Activated CD4-positive, alpha-beta T cell treated with anti-CD3 and anti-CD28 coated beads, Interleukin-2, amount 10 ng/mL, durations not matched to agents 24 days and 14 days (primary cell): ENCODE measurements at regions of chr13 and their contacts with region 1.

Region 1: DNA sequence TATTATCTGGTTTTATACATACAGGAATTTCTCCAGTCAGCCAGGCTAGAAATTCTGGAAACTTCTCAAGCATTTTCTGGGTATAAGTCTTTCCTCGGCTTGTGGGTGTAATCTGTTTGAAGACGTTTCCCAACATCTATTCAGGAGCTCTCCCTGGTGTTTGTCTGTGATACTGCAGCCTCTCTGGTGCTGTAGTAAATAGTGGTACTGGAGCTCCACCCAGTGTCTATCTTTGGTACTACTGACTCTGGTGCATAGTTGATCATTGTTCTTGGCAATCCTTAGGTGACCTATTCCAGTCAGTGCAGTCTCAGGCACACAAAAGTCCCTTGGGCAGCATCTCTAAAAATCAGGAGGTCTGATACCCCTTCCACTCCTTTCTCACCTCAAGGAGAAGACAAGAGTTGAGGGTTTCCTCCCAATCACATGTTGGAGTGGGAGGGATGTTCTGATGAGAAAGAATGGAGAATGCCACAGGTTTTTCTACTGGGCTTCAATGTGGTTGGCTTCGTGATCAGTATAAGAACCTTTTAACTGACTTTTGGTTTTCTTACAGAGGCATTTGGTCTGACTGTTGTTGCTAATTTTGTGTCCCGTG is 115.5 kb downstream of the CYSLTR2 start:
- DNase-seq: peak; percentile 96
- H3K4me3 Mint-ChIP-seq: no peak overlapping the region
- H3K27ac Mint-ChIP-seq: no peak overlapping the region
- H3K4me1 Mint-ChIP-seq: peaks cover 11% of the 10 kb centered on the region
- H3K27me3 Mint-ChIP-seq: peaks cover 26% of the 10 kb centered on the region

Region 2: DNA sequence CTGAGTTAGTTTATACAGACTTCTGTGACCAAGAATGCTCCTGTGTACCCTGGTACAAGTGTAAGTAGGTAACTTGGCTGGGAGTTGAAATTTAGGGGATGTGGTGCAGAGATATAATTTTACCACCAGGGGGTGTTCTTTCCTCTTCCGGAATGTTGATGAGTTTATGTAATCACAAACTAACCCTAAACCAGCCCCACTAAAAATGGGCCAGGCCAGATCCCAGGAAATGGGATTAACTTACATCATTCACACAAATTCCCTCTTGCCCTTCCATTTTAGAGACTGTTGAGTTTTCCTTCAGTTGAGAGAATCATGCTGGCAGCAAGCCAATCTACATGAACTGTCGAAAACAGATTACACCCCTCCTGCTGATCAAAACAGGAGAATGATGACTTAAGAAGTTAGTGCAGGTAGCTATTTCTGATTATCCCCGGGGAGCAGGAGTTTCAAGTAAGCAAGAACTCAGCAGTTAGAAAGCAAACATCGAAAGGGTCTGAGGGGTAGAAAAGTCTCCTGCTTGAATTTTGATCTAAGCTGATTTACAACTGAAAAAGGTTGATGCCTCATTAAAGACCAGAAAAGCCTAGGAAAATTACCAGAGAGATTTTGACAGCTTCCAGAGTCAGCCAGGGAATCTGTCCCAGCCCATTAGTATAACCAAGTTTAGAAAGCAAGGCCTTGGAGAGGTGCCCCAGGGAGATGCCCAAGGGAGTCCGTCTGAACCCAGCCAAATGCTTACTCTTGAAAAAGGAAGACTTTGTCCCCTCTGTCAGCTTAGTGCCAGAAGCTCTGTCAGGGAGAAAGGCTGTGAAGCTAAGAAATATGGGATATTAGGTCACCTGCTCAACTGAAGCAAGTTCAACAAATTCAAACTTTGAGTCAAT is 642.0 kb before region 1 on chr13:
- intact Hi-C with region 1: loop called (anchors 1 kb)
- DNase-seq: peak; percentile 81
- H3K4me3 Mint-ChIP-seq: no peak overlapping the region
- H3K27ac Mint-ChIP-seq: no peak overlapping the region
- H3K4me1 Mint-ChIP-seq: peaks cover 18% of the 10 kb centered on the region
- H3K27me3 Mint-ChIP-seq: peaks cover 13% of the 10 kb centered on the region

Region 3: GRCh38 chr13:48334534-48335127 is 434.6 kb before region 1 on chr13:
- intact Hi-C with region 1: loop called (anchors 1 kb)
- DNase-seq: peak; percentile 65
- H3K4me3 Mint-ChIP-seq: no peak overlapping the region
- H3K27ac Mint-ChIP-seq: no peak overlapping the region
- H3K4me1 Mint-ChIP-seq: peaks cover 6% of the 10 kb centered on the region
- H3K27me3 Mint-ChIP-seq: no peaks in the 10 kb centered on the region

Region 4: GRCh38 chr13:48595431-48596429 is 173.5 kb before region 1 on chr13:
- intact Hi-C with region 1: loop called (anchors 1 kb)
- DNase-seq: peak; percentile 84
- H3K4me3 Mint-ChIP-seq: no peak overlapping the region
- H3K27ac Mint-ChIP-seq: no peak overlapping the region
- H3K4me1 Mint-ChIP-seq: peaks cover under 1% of the 10 kb centered on the region
- H3K27me3 Mint-ChIP-seq: peaks cover 6% of the 10 kb centered on the region

Region 5: GRCh38 chr13:48731957-48732569 is 37.1 kb before region 1 on chr13:
- intact Hi-C with region 1: loop called (anchors 5 kb)
- DNase-seq: peak; percentile 85
- H3K4me3 Mint-ChIP-seq: peak overlapping the region; percentile 75
- H3K27ac Mint-ChIP-seq: no peak overlapping the region
- H3K4me1 Mint-ChIP-seq: peaks cover 7% of the 10 kb centered on the region
- H3K27me3 Mint-ChIP-seq: peaks cover 5% of the 10 kb centered on the region